GM12878 (cell line): ENCODE measurements at regions of chr6 and their contacts with region 1.

Region 1: GRCh38 chr6:7960848-7961247 is 50.3 kb upstream of the TXNDC5 start:
- DNase-seq: peak; percentile 48
- ATAC-seq: peak; percentile 70
- H3K4me3 ChIP-seq: no peak overlapping the region
- H3K27ac ChIP-seq: no peak overlapping the region
- H3K4me1 ChIP-seq: peaks cover 16% of the 10 kb centered on the region
- H3K27me3 ChIP-seq: no peaks in the 10 kb centered on the region
- CTCF ChIP-seq: no peak
- EP300 ChIP-seq: peak; percentile 45 to 49; a peak in 2 of 4 replicates
- POLR2A ChIP-seq: no peak
- RAD21 ChIP-seq: no peak

Region 2: DNA sequence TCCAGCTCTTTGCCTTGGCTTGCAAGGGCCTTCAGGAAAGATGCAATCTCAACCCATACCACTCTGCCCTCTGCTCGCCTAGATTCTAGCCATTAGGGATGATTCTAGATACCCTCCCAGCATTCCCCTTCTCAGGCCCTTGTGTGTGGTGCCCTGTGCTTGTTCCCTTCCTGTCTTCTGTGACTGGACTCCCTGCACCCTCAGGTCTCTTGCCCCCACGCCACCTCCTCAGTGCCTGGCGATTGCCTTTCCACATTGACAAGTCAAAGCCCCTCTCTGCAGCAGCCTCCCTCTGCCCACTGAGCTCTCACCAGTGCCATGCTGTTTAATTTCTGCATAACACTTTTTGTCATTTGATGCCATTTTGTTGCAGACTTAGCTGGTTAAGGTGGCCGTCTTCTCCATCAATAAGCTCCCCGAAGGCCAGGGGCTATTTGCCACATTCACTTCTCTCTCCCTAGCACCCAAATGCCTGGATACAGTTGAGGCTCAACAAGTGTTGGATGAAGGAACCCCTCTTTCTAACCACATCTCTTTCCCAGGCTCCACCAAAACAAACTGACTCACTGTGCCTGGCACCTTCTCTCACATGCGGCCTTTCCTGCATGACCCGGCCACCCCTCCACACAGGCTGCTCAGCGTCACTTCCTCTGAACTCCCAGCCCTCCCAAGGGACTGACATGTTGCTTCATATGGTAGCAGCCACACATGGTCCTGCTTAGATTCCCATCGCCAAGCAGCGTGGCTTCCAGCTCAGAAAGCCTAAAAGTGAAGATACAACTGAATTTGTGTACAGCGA is 45.7 kb before region 1 on chr6:
- CTCF ChIA-PET with region 1: interaction called, 3 read pairs
- POLR2A ChIA-PET with region 1: no interaction called
- RAD21 ChIA-PET with region 1: no interaction called
- SMC1A ChIA-PET with region 1: interaction called, 5 read pairs
- in situ Hi-C with region 1: loop called (anchors 5 kb)
- intact Hi-C with region 1: loop called (anchors 1 kb)
- DNase-seq: no peak
- ATAC-seq: no peak
- H3K4me3 ChIP-seq: no peak overlapping the region
- H3K27ac ChIP-seq: no peak overlapping the region
- H3K4me1 ChIP-seq: peaks cover 66% of the 10 kb centered on the region
- H3K27me3 ChIP-seq: peaks cover 0 to 3% of the 10 kb centered on the region in 2 experiments; a peak in 2 of 4 replicates
- CTCF ChIP-seq: no peak
- EP300 ChIP-seq: no peak
- POLR2A ChIP-seq: no peak
- RAD21 ChIP-seq: no peak